ENCODE measurements at regions of chr1 and their contacts with region 1.

Region 1: DNA sequence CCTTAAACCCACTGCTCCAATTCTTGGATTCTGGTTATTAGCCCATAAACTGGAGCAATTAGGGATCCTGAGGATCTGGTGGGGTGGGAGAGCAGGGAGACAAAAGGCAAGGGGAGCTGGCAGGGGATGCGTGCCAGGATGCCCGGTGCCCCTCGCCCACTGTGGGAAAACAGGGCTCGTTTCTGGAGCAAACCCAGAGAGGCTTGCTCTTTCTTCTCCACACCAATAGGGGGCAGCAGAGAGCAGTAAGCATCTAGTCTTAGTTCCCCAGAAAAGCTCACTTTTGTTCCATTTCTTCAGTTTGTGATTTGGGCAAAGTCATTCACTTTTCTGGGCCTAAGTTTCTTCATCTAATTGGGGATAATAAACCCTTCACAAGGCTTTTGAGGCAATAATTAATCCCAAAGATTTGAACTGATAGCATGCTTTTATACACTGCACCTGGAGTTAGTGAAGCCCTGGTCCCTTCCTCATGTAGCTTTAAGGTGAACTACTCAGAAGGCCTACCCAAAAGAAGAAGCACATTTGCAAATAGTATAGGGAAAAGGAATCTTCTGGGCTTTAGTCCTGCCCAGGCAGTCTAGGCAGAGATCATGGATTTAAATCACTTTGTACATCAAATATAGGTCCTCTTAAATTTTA is 160.6 kb upstream of the USP24 start:
- DNase-seq: no peak
- H3K4me3 ChIP-seq: no peak overlapping the region
- H3K27ac ChIP-seq: peak overlapping the region; percentile 3 to 58 (median 38)
- H3K4me1 ChIP-seq: peaks cover 0 to 5% (median 2%) of the 10 kb centered on the region in 4 donors
- H3K27me3 ChIP-seq: no peaks in the 10 kb centered on the region
- CTCF ChIP-seq: peak; percentile 59 to 93 (median 84)
- EP300 ChIP-seq: no peak
- POLR2A ChIP-seq: no peak

Region 2: DNA sequence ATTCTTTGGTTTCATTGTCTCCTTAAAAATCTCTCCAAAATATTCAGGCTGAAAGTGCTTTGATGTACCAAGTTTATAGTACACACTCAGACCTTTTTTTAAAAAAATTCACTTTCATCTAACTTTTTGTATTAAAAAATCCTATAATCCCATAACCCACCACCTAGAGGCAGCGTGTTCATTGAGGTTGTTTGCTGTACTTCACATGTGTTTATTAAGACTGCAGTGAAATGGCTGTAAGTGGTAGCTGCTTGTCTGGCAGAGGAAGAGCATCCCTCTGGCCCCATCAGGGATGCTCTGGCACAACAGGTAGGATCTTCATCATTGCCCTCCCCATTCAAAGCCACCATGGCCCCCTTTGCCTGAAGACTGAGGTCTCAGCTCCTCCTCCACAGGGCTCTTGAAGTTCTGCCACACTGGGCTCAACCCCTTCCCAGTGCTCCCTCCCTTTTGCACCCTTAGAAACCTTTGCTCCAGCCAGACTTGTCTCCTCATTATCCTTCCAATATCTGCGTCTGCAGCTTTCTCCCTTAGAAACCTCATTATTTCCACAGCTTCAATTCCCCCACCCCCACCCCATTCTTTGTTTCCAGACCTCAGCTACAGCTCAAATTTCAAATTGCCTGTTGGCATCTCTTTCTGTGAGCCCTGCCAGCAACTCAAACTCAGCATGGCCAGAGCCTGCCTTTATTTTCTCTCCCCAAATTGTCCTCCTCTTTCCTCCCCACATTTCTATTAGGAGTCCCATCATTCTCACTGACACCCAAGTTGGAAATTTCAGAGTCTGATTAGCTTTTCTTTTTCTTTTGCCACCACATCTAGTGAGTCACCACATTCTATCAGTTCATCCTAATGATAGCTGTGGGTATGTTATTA is 209.0 kb after region 1 on chr1:
- intact Hi-C with region 1: loop called (anchors 5 kb)
- DNase-seq: no peak
- H3K4me3 ChIP-seq: no peak overlapping the region
- H3K27ac ChIP-seq: peak overlapping the region in 2 of 4 donors; percentile 1 to 33
- H3K4me1 ChIP-seq: peaks cover 0 to 33% (median 17%) of the 10 kb centered on the region in 4 donors
- H3K27me3 ChIP-seq: no peaks in the 10 kb centered on the region
- CTCF ChIP-seq: no peak
- EP300 ChIP-seq: no peak
- POLR2A ChIP-seq: no peak

Region 3: DNA sequence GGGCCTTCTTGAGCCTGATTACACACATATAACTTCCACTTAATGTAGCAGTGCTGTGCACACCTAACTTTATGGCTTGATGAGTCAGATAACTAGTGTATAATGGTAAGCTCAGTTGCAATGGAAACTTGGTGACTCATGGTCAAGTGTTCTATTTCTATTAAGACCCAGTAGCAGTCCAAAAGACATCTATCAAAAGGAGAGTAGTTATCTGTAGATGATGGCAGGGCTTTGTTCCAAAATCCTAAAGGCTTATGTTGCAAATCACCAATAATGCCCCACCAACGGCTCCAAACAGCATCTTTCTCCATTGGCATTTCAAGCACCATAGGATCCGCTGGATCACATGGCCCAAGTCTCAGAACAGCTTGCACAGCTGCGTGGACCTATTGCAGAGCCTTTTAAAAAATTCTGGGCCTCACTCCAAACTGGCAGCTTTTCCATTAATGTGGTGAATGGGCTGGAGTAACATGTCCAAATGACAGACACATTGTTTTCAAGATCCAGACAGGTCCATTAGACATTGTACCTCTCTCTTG is 406.3 kb after region 1 on chr1:
- intact Hi-C with region 1: loop called (anchors 5 kb)
- DNase-seq: peak; percentile 88
- H3K4me3 ChIP-seq: no peak overlapping the region
- H3K27ac ChIP-seq: peak overlapping the region in 3 of 4 donors; percentile 41 to 63 (median 52)
- H3K4me1 ChIP-seq: peaks cover 0 to 21% (median 10%) of the 10 kb centered on the region in 4 donors
- H3K27me3 ChIP-seq: no peaks in the 10 kb centered on the region
- CTCF ChIP-seq: no peak
- EP300 ChIP-seq: peak; percentile 28 to 76 (median 65)
- POLR2A ChIP-seq: no peak

Region 4: DNA sequence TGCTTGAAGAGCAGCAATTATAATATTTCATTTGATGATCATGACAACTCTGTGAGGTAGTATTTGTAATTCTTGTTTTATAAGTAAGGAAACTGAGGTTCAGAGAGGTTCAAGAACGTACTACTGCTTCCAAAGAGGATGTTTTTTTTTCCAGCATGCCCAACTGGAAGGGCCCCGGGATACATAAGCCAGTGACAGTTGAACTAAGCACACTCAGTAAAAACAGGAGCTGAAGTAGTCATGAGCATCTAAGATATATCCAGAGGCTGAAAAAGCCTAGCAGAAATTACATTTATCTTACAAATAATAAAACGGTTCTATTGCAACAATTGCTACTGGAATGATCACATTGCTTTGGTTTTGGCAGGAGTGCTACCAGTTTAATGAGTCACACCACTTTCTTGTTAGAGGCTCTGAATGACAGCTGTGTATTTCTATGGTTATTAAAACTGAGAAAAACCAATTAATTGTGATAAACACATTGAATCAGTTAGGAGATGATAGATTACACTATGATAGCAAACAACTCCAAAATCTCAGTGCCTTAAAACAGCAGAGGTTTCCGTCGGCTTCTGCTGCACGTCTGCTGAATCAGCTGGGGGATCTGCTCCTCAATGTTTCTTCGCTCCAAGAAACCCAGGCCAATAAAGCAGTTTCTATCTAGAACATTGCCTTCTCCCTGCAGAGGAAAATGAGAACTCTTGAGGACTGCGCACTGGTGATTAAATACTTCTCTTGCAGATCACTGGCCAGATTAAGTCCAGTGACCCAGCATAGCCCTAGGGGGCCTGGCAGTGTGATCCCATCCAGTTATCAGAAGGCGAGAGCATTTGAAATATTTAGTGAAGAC is 680.9 kb after region 1 on chr1:
- intact Hi-C with region 1: loop called (anchors 10 kb)
- DNase-seq: no peak
- H3K4me3 ChIP-seq: no peak overlapping the region
- H3K27ac ChIP-seq: peak overlapping the region in 3 of 4 donors; percentile 36 to 56 (median 41)
- H3K4me1 ChIP-seq: peaks cover 0 to 28% (median 27%) of the 10 kb centered on the region in 4 donors
- H3K27me3 ChIP-seq: no peaks in the 10 kb centered on the region
- CTCF ChIP-seq: no peak
- EP300 ChIP-seq: no peak
- POLR2A ChIP-seq: no peak

Region 5: DNA sequence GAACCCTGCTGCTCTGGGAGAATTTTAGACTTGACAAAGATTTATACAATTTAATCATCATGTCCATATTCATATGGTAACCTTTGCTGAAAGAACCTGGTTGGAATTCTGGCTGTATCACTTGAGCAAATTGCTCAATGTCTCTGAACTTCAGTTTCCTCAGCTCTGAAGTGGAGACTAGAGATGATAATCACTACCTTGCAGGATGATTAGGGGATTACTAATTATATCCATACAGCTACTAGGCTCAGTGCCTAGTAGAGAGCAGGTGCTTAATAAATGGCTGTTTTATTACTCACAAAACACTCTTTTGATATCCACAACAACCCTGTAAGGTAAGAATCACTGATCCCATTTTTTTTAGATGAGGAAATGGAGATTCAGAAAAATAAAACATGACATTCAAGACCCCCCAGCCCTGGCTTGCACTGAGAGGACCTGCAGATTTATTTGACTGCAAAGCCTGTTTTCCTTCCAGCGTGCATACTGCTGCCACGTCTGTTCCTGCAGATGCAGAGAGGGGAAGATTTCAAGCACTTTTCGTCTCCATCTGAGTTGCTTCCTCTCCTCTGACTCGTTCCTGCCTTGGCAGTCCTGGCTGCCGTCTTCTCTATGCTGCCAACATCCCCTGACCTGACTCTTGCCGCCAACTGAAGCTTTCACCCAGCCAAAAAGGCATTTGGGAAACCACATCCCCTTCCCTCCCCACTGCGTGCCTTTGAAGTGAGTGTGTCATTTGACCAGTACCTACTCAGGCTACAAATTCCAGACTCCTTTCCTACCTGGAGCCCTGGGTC is 1000.6 kb after region 1 on chr1:
- intact Hi-C with region 1: loop called (anchors 10 kb)
- DNase-seq: peak; percentile 83
- H3K4me3 ChIP-seq: no peak overlapping the region
- H3K27ac ChIP-seq: peak overlapping the region; percentile 41 to 78 (median 71)
- H3K4me1 ChIP-seq: peaks cover 0 to 82% (median 70%) of the 10 kb centered on the region in 4 donors
- H3K27me3 ChIP-seq: no peaks in the 10 kb centered on the region
- CTCF ChIP-seq: no peak
- EP300 ChIP-seq: no peak
- POLR2A ChIP-seq: no peak

Region 6: DNA sequence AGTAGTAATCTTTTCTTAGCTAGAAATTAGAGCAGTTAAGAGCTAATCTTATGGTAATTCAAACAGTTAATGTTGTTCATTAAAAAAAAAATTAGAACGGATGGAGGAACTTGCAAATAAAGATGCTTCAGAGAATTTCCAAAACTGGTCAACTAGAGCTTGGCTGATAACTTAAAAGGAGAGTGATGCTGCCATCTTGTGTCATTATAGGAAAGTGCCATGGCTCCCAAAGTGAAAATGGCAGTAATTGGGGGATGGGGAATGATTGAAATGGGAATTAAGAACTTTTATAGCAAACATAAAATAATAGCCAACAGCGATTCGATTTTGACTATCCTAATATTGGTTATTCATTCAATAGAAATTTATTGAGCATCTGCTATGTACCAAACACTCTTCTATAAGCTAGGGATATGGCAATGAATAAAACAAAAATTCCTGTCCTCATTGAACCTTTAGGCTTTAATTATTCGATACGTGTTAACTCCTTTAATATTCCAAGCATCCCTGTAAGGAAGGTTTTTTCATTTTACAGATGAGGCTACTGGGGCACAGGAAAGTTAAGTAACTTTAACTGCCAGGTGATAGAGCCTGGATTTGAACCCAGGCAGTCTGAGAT is 1209.3 kb after region 1 on chr1:
- intact Hi-C with region 1: loop called (anchors 2 kb)
- DNase-seq: no peak
- H3K4me3 ChIP-seq: no peak overlapping the region
- H3K27ac ChIP-seq: no peak overlapping the region
- H3K4me1 ChIP-seq: peaks cover 0 to 3% (median 2%) of the 10 kb centered on the region in 4 donors
- H3K27me3 ChIP-seq: no peaks in the 10 kb centered on the region
- CTCF ChIP-seq: peak; percentile 74 to 88 (median 82)
- EP300 ChIP-seq: no peak
- POLR2A ChIP-seq: no peak

Region 7: DNA sequence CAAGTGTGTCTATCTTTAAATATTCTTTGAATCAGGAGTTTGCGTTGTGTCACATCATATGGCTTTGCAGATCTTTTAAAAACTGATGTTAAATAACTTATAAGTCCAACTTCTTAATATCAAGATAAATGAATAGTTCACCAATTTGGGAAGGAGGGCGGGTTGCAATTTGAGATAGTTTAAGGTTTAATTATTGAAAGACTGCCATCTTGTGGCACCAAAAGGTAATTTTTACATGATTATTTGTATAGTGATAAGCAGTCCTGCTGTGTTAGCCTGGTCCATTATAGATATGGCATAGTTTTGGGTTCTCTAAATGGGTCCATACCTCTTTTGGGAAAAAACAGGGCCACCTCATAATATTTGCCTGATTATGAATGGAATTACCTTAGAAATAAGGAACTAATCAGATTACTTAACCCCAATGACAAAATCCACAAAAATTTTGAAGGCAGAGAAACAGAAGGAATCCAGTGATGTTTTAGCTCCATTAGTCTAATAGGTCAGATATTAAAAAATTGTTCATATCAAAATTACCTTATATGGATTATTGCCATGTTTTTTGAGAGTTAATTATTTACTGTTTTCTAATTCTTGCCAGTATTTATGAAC is 1333.6 kb after region 1 on chr1:
- intact Hi-C with region 1: loop called (anchors 5 kb)
- DNase-seq: no peak
- H3K4me3 ChIP-seq: no peak overlapping the region
- H3K27ac ChIP-seq: no peak overlapping the region
- H3K4me1 ChIP-seq: peaks cover 0 to 8% (median 0%) of the 10 kb centered on the region in 4 donors
- H3K27me3 ChIP-seq: no peaks in the 10 kb centered on the region
- CTCF ChIP-seq: peak; percentile 11 to 65 (median 42)
- EP300 ChIP-seq: no peak
- POLR2A ChIP-seq: no peak